Posterior vena cava (tissue), 2 donors: ENCODE measurements at regions of chr17 and their contacts with region 1.

Region 1: GRCh38 chr17:3762922-3763776 is 37.8 kb downstream of the ITGAE start:
- DNase-seq: peak; percentile 58

Region 2: GRCh38 chr17:3773511-3773910 is 10.4 kb after region 1 on chr17:
- intact Hi-C with region 1: loop called in 1 of 2 experiments (anchors 1 kb)
- DNase-seq: no peak

Region 3: DNA sequence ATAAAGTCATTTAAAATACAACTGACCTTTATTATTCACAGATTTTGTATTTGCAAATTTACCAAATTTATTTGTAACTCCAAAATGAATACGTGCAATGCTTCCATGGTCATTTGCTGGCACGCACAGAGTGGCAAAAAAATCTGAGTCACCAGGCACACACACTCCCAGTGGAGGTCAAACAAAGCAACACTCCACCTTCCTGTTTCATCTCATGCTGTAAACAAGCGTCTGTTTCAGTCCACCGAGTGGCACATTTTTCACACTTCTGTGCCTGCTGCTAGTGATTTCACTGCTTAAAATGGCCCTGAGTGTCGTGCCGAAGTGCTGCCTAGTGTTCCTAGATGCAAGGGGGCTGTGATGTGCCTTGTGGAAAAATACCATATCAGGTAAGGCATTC is 55.6 kb after region 1 on chr17:
- intact Hi-C with region 1: no loop called
- DNase-seq: no peak

Region 4: GRCh38 chr17:4043862-4044261 is 280.7 kb after region 1 on chr17:
- intact Hi-C with region 1: no loop called
- DNase-seq: no peak

Region 5: DNA sequence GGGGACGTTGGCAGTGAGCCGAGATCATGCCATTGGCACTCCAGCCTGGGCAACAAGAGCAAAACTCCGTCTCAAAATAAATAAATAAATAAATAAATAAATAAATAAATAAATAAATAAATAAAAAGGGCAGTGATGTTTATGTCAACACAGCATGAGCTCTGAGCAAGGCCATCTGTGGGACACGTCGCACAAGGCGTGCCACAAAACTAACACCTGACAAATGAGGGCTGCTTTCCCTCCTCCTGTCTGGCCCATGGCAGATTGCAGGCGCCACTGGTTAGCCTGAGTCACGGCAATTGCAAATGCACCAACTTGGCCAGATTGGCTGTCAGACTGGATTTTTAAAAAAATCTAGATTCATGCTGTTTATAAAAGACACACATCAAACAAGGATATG is 644.7 kb after region 1 on chr17:
- intact Hi-C with region 1: loop called in 1 of 2 experiments (anchors 5 kb)
- DNase-seq: no peak